GM12878 (cell line): ENCODE measurements at regions of chr13 and their contacts with region 1.

Region 1: DNA sequence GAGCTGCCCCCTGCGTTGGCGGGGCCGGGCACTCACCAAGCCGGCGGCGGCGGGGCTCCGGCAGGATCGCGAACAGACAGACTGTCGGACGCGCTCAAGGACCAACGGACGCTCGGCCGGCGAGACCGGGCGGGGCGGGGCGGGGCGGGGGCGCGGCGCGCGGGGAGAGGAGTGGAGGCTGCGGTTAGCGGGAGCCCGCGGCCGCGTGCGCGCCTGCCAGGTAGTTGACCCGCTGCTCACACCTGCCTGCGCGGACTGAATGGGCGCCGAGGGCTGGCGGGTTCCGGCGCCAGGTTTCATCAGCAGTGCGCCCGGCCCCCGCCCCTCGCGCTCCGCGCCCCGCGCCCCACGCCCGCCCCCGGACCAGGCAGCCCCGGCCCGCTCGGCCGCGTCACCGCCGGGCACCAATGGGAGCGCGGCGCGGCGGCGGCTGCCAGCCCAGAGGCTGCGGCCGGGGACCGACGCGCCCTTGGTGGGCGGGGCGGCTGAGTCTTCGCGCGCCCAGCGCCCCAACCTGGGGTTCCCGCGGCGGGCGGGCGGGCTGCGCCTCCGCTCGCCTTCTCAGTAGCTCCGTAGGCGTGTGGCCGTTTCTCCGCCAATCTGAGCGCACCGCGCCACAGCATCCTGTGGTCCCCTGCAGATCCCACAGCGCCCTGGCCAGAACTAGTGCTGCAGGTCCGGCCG is at the start of gene SLC7A1:
- DNase-seq: peak; percentile 43
- ATAC-seq: peak; percentile 85
- H3K4me3 ChIP-seq: peak within 1 kb of the TSS; percentile 70
- H3K27ac ChIP-seq: peak within 1 kb of the TSS; percentile 96
- H3K4me1 ChIP-seq: peaks cover 3% of the 10 kb centered on the region; the same call in 1 of the 2 replicates
- H3K27me3 ChIP-seq: no peaks in the 10 kb centered on the region
- CTCF ChIP-seq: 0 out of 6 replicates have a peak, but pooled peaks of 1 of the 3 experiments have one; percentile 16
- EP300 ChIP-seq: no peak
- POLR2A ChIP-seq: peak; percentile 72
- RAD21 ChIP-seq: 0 out of 2 replicates have a peak, but pooled peaks have one; percentile 8
- polyA plus RNA-seq, gene SLC7A1: 6.4 to 7.6 TPM

Region 2: DNA sequence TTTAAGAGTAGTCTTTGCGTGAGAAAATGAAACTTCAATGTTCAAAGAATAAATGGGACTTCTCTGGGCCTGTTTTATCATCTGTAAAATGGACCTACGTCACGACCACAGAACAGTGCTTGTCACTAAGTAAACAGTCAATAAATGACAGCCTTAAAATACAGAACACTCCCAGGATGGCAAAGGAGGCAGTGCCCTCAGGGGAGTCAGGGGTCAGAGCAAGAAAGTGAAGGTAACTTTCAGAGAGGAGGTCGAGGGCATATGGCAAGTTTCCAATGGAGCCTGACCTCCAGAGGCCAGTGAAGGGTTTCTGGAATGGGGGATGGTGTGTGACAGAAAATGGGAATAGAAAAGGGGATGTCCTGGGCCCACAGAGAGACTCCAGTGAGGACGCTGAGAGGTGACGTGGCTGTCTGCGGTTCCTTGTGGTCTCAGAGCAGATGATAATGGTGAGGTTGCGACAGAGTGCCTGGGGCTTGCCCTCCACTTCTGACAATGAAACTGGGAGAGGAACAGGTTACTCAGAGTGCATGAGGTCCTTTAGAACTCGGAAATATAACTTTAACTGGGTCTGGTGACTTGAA is 163.1 kb after region 1 on chr13:
- CTCF ChIA-PET with region 1: no interaction called
- POLR2A ChIA-PET with region 1: no interaction called
- RAD21 ChIA-PET with region 1: interaction called, 3 read pairs
- SMC1A ChIA-PET with region 1: no interaction called
- in situ Hi-C with region 1: no loop called
- intact Hi-C with region 1: loop called (anchors 5 kb)
- DNase-seq: peak; percentile 74
- ATAC-seq: peak; percentile 96
- H3K4me3 ChIP-seq: no peak overlapping the region
- H3K27ac ChIP-seq: no peak overlapping the region
- H3K4me1 ChIP-seq: peaks cover 3% of the 10 kb centered on the region; the same call in 1 of the 2 replicates
- H3K27me3 ChIP-seq: no peaks in the 10 kb centered on the region
- CTCF ChIP-seq: no peak
- EP300 ChIP-seq: peak; percentile 67 to 76; a peak in 3 of 4 replicates
- POLR2A ChIP-seq: no peak
- RAD21 ChIP-seq: no peak